Heart left ventricle (tissue), 16 donors: ENCODE measurements at regions of chr2 and their contacts with region 1.

Region 1: DNA sequence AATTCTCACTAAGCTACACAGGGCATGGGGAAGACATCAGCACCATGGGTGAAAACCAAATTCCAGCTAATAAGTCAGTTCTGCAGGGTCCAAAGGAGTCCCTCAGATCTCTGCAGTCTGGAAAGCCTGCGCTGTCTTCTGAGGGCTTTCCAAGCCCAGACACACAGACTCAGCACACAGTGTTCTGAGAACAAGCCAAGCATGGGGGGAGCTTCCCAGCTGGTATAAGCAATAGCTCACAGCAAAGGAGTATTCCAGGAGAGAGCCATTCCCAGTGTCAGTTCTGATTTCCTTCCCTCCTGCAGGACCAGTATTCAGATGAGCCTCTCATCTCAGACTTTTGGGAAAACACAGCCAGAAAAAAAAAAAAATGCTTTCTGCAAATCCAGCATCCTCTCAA is 370.8 kb downstream of the TNS1 start:
- DNase-seq: peak in 1 of 5 donors; percentile 49
- ATAC-seq: peak; percentile 57 to 83 (median 70)
- H3K4me3 ChIP-seq: no peak overlapping the region
- H3K27ac ChIP-seq: peak overlapping the region in 1 of 12 donors; percentile 12
- H3K4me1 ChIP-seq: peaks cover 0 to 51% (median 17%) of the 10 kb centered on the region in 12 donors
- H3K27me3 ChIP-seq: no peaks in the 10 kb centered on the region
- CTCF ChIP-seq: no peak
- POLR2A ChIP-seq: no peak

Region 2: GRCh38 chr2:217538719-217539118 is 93.3 kb before region 1 on chr2:
- intact Hi-C with region 1: loop called in 1 of 10 experiments (anchors 10 kb)
- DNase-seq: no peak
- ATAC-seq: no peak
- H3K4me3 ChIP-seq: no peak overlapping the region
- H3K27ac ChIP-seq: no peak overlapping the region
- H3K4me1 ChIP-seq: peaks cover 0 to 17% (median 0%) of the 10 kb centered on the region in 12 donors
- H3K27me3 ChIP-seq: no peaks in the 10 kb centered on the region
- CTCF ChIP-seq: no peak
- POLR2A ChIP-seq: no peak

Region 3: GRCh38 chr2:217766356-217766755 is 134.3 kb after region 1 on chr2:
- intact Hi-C with region 1: no loop called
- DNase-seq: no peak
- ATAC-seq: no peak
- H3K4me3 ChIP-seq: no peak overlapping the region
- H3K27ac ChIP-seq: no peak overlapping the region
- H3K4me1 ChIP-seq: no peaks in the 10 kb centered on the region
- H3K27me3 ChIP-seq: no peaks in the 10 kb centered on the region
- CTCF ChIP-seq: no peak
- POLR2A ChIP-seq: no peak

Region 4: GRCh38 chr2:217846321-217846743 is 214.3 kb after region 1 on chr2:
- intact Hi-C with region 1: no loop called
- DNase-seq: peak in 4 of 5 donors; percentile 58 to 71 (median 66)
- ATAC-seq: peak in 3 of 4 donors; percentile 5 to 19 (median 5)
- H3K4me3 ChIP-seq: no peak overlapping the region
- H3K27ac ChIP-seq: peak overlapping the region in 11 of 12 donors; percentile 14 to 96 (median 55)
- H3K4me1 ChIP-seq: peaks cover 16 to 98% (median 80%) of the 10 kb centered on the region in 12 donors
- H3K27me3 ChIP-seq: no peaks in the 10 kb centered on the region
- CTCF ChIP-seq: no peak
- POLR2A ChIP-seq: no peak